ENCODE measurements at regions of chr10 and their contacts with region 1.

Region 1: DNA sequence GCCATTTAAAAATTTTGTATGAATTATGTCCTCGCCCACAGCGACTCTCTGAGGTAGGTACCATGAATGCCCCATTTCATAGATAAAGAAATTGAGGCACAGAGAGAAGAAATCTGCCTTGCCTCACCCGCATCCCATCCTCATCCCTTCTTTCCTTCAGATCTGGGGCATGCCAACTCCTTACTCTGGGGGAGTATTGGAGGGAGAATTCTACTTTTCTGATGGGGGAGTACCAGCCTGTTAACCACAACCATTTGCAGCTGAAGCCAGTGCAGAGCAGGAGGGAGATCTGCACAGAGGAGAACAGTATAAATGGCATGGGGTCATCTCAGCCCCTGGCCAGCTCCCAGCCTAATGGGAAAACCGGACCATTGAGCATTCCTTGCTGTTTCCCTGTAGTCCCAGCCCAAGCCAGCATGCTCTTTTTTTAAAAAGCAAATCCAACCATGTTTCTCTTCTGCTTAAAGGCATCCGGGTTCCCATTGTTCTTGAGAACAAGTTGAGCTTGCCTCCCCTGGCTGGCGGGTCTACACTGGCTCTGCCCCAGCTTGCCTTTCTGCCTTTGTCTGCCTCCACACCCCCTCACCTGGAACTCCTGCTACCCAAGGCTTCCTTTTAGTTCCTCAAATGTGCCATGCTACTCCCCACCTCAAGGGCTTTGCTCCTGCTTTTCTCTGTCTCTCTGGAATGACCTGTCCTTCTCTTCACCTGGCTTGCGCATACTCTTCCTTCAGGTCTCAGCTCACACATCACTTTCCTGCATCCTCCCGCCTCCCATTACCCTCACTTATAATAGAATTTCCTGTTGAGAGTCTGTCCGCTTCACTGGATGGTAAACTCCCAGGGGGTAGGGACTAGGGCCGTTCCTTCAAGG is 8.8 kb upstream of the ZNF503 start:
- DNase-seq: no peak
- ATAC-seq: no peak

Region 2: GRCh38 chr10:75350791-75351190 is 59.6 kb before region 1 on chr10:
- intact Hi-C with region 1: no loop called
- DNase-seq: no peak
- ATAC-seq: no peak

Region 3: GRCh38 chr10:75547391-75548298 is 137.3 kb after region 1 on chr10:
- intact Hi-C with region 1: loop called (anchors 5 kb)
- DNase-seq: no peak
- ATAC-seq: no peak